Endothelial cell of umbilical vein (primary cell): ENCODE measurements at regions of chr1 and their contacts with region 1.

Region 1: GRCh38 chr1:21189906-21190500 is 13.3 kb upstream of the EIF4G3 start:
- DNase-seq: peak; percentile 42
- H3K4me3 ChIP-seq: no peak overlapping the region
- H3K27ac ChIP-seq: no peak overlapping the region
- H3K4me1 ChIP-seq: peaks cover 9% of the 10 kb centered on the region
- H3K27me3 ChIP-seq: no peaks in the 10 kb centered on the region
- CTCF ChIP-seq: no peak
- POLR2A ChIP-seq: no peak

Region 2: GRCh38 chr1:20696397-20697329 is 493.3 kb before region 1 on chr1:
- CTCF ChIA-PET with region 1: interaction called, 150 read pairs
- POLR2A ChIA-PET with region 1: interaction called, 3 read pairs
- dilution Hi-C with region 1: no loop called
- intact Hi-C with region 1: loop called (anchors 1 kb)
- DNase-seq: peak; percentile 86
- H3K4me3 ChIP-seq: peak overlapping the region; percentile 34 to 45 (median 38)
- H3K27ac ChIP-seq: peak overlapping the region; percentile 44
- H3K4me1 ChIP-seq: peaks cover 4% of the 10 kb centered on the region
- H3K27me3 ChIP-seq: no peaks in the 10 kb centered on the region
- CTCF ChIP-seq: peak; percentile 65 to 96
- POLR2A ChIP-seq: no peak

Region 3: DNA sequence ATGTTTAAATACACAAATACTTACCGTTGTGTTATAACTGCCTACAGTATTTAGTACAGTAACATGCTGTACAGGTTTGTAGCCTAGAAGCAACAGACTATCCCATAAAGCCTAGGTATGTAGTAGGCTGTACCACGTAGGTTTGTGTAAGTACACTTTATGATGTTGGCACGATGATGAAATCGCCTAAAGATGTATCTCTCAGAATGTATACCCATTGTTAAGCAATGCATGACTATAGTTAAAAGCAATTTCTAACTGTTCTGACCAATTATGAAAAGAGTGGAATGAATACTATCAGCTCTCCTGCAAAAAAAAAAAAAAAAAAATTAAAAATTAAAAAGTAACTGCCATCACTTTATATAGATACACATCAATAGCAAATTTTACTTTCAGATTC is 414.3 kb before region 1 on chr1:
- CTCF ChIA-PET with region 1: interaction called, 15 read pairs
- POLR2A ChIA-PET with region 1: no interaction called
- dilution Hi-C with region 1: no loop called
- intact Hi-C with region 1: no loop called
- DNase-seq: no peak
- H3K4me3 ChIP-seq: no peak overlapping the region
- H3K27ac ChIP-seq: no peak overlapping the region
- H3K4me1 ChIP-seq: no peaks in the 10 kb centered on the region
- H3K27me3 ChIP-seq: no peaks in the 10 kb centered on the region
- CTCF ChIP-seq: no peak
- POLR2A ChIP-seq: no peak

Region 4: GRCh38 chr1:20867847-20868246 is 322.2 kb before region 1 on chr1:
- CTCF ChIA-PET with region 1: interaction called, 12 read pairs
- POLR2A ChIA-PET with region 1: no interaction called
- dilution Hi-C with region 1: no loop called
- intact Hi-C with region 1: no loop called
- DNase-seq: no peak
- H3K4me3 ChIP-seq: no peak overlapping the region
- H3K27ac ChIP-seq: no peak overlapping the region
- H3K4me1 ChIP-seq: no peaks in the 10 kb centered on the region
- H3K27me3 ChIP-seq: no peaks in the 10 kb centered on the region
- CTCF ChIP-seq: no peak
- POLR2A ChIP-seq: no peak

Region 5: GRCh38 chr1:21022279-21023040 is 167.5 kb before region 1 on chr1:
- CTCF ChIA-PET with region 1: interaction called, 10 read pairs
- POLR2A ChIA-PET with region 1: no interaction called
- dilution Hi-C with region 1: no loop called
- intact Hi-C with region 1: no loop called
- DNase-seq: peak; percentile 99
- H3K4me3 ChIP-seq: peak overlapping the region in 1 of 3 experiments; percentile 40
- H3K27ac ChIP-seq: peak overlapping the region; percentile 98
- H3K4me1 ChIP-seq: peaks cover 15% of the 10 kb centered on the region
- H3K27me3 ChIP-seq: no peaks in the 10 kb centered on the region
- CTCF ChIP-seq: no peak
- POLR2A ChIP-seq: no peak